Caco-2 (cell line): ENCODE measurements at regions of chr5 and their contacts with region 1.

Region 1: DNA sequence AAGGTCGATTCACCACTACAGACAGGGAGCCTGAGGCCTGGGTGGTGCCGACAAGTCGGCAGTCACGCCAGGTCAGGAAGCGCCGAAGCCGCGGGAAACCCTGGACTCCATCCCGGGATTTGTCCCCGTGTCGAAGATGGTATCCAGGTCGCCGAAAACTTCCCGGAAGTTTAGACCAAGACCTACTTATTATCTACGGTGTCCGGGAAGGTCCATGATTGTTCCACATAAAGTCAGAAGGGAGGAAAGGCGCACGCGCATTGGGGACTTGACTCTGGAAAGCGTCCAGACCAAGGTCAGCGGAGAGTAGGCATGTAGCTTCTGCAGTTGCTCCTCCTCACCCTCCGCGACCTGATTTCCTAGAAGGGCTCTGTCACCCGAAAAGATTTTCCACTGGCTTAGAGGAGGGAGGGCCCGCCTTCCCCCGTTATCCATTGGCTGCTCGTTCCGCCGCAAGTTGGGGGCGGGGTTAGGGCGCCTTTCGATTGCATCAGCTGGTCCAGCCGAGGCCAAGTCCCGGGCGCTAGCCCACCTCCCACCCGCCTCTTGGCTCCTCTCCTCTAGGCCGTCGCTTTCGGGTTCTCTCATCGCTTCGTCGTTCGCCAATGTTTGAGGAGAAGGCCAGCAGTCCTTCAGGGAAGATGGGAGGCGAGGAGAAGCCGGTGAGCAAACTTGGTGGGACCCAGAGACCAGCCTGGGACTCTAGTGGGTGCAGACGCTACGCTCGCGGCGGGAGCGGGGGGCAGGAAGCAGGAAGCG is at the start of gene TARS1:
- DNase-seq: peak; percentile 98 to 99
- H3K4me3 ChIP-seq: peak within 1 kb of the TSS; percentile 79
- H3K4me3 Mint-ChIP-seq: no peak within 1 kb of the TSS
- H3K27ac Mint-ChIP-seq: no peak within 1 kb of the TSS
- H3K4me1 ChIP-seq: peaks cover 16% of the 10 kb centered on the region
- H3K4me1 Mint-ChIP-seq: peaks cover 11% of the 10 kb centered on the region
- H3K27me3 ChIP-seq: no peaks in the 10 kb centered on the region
- H3K27me3 Mint-ChIP-seq: no peaks in the 10 kb centered on the region
- CTCF ChIP-seq: no peak
- total RNA-seq, gene TARS1: 278 and 288 TPM in 2 replicates

Region 2: GRCh38 chr5:33595308-33595707 is 154.6 kb after region 1 on chr5:
- CTCF ChIA-PET with region 1: no interaction called
- POLR2A ChIA-PET with region 1: no interaction called
- intact Hi-C with region 1: loop called (anchors 1 kb)
- DNase-seq: no peak
- H3K4me3 ChIP-seq: no peak overlapping the region
- H3K4me3 Mint-ChIP-seq: no peak overlapping the region
- H3K27ac Mint-ChIP-seq: no peak overlapping the region
- H3K4me1 ChIP-seq: no peaks in the 10 kb centered on the region
- H3K4me1 Mint-ChIP-seq: no peaks in the 10 kb centered on the region
- H3K27me3 ChIP-seq: no peaks in the 10 kb centered on the region
- H3K27me3 Mint-ChIP-seq: peaks cover 21% of the 10 kb centered on the region
- CTCF ChIP-seq: no peak

Region 3: GRCh38 chr5:33772380-33772897 is 331.8 kb after region 1 on chr5:
- CTCF ChIA-PET with region 1: no interaction called
- POLR2A ChIA-PET with region 1: no interaction called
- intact Hi-C with region 1: no loop called
- DNase-seq: no peak
- H3K4me3 ChIP-seq: no peak overlapping the region
- H3K4me3 Mint-ChIP-seq: no peak overlapping the region
- H3K27ac Mint-ChIP-seq: no peak overlapping the region
- H3K4me1 ChIP-seq: no peaks in the 10 kb centered on the region
- H3K4me1 Mint-ChIP-seq: no peaks in the 10 kb centered on the region
- H3K27me3 ChIP-seq: no peaks in the 10 kb centered on the region; the same call in 1 of the 2 replicates
- H3K27me3 Mint-ChIP-seq: peaks cover 28% of the 10 kb centered on the region
- CTCF ChIP-seq: no peak

Region 4: DNA sequence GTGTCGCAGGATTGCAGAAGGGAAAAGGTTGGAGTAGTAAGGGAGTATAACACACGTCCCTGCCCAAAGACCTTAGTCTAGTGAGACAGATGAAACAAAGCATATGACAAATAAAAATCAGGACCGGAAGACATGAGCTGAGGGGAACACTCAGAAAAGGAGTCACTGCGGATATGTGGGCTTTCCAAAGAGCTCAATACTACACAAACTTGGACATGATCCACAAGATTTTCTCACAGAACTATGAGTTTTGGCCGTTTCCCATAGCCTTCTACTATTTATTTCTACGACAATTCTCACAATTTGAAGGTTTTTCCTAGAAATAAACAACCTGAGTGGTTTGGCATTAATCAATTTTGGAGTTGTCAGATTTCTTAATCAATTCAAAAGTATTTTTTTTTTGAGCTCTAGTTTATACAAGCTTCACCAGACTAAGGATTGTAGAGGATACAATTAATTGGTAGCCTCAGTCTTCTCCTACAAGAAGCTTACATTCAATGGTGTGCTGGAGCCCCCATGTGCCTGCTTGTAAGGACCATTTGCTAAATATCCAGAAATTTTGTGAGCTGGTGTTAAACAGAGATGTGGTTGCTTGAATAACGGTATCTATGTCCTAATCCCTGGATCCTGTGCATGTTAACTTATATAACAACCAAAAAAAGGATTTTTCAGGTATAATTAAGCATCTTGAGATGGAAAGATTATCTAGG is 359.7 kb after region 1 on chr5:
- CTCF ChIA-PET with region 1: no interaction called
- POLR2A ChIA-PET with region 1: no interaction called
- intact Hi-C with region 1: loop called (anchors 1 kb)
- DNase-seq: no peak
- H3K4me3 ChIP-seq: no peak overlapping the region
- H3K4me3 Mint-ChIP-seq: no peak overlapping the region
- H3K27ac Mint-ChIP-seq: no peak overlapping the region
- H3K4me1 ChIP-seq: no peaks in the 10 kb centered on the region
- H3K4me1 Mint-ChIP-seq: no peaks in the 10 kb centered on the region
- H3K27me3 ChIP-seq: no peaks in the 10 kb centered on the region
- H3K27me3 Mint-ChIP-seq: peaks cover 8% of the 10 kb centered on the region
- CTCF ChIP-seq: no peak

Region 5: DNA sequence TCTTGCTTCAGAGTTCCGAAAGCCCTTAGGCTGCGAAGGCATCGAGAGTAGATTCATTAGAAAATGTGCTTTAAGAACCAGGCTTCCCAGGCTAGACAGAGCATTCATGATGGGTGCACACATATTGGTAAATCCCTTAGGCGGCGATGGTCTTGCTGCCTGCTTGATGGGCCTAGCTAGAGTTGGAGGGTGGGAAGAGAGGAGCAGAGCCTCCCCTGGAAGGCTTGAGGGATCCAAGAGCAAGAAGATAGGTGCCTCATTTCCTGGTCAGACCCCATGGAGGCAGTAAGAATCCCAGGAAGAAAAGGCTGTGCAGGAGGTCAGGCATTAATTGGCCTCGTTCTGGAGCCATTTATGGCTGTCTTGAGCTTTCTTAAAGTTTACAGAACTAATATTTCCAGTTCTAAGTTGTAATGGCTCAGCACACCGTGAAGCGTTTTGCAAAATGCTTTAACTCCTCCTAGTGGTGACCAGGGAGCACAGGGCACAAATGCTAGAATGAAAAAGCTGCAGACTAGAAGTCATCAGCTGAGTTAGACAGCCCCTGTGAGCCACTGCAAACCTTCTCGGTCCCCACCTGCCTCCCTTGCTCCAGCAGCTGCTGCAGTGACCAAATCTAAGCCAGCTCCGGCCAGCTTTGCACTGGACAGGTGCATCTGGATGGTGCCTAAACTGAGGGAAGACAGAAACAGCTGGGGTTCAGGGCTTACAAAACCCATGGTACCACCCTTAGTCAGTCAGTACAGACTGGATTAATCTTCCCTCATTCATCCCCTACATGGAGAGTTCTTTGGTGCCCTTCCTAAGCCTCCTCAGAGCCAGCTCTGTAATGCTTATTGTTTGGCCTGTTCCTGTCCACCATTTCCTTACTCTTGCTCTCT is 529.2 kb after region 1 on chr5:
- CTCF ChIA-PET with region 1: interaction called, 8 read pairs
- POLR2A ChIA-PET with region 1: no interaction called
- intact Hi-C with region 1: loop called (anchors 1 kb)
- DNase-seq: peak; percentile 32 to 42
- H3K4me3 ChIP-seq: no peak overlapping the region
- H3K4me3 Mint-ChIP-seq: no peak overlapping the region
- H3K27ac Mint-ChIP-seq: no peak overlapping the region
- H3K4me1 ChIP-seq: peaks cover 3% of the 10 kb centered on the region; the same call in 1 of the 2 replicates
- H3K4me1 Mint-ChIP-seq: peaks cover 6% of the 10 kb centered on the region
- H3K27me3 ChIP-seq: no peaks in the 10 kb centered on the region
- H3K27me3 Mint-ChIP-seq: no peaks in the 10 kb centered on the region
- CTCF ChIP-seq: peak; percentile 62 to 74